ENCODE measurements at regions of chr11 and their contacts with region 1.

Region 1: GRCh38 chr11:67656278-67656922 is 5.9 kb upstream of the ACY3 start:
- DNase-seq: peak; percentile 49
- ATAC-seq: peak; percentile 36; the same call in 2 of the 3 replicates
- H3K4me3 ChIP-seq: peak overlapping the region; percentile 14; the same call in 1 of the 2 replicates
- H3K27ac ChIP-seq: peak overlapping the region; percentile 71
- H3K4me1 ChIP-seq: peaks cover 29% of the 10 kb centered on the region
- H3K27me3 ChIP-seq: no peaks in the 10 kb centered on the region
- CTCF ChIP-seq: no peak
- EP300 ChIP-seq: no peak
- POLR2A ChIP-seq: no peak
- RAD21 ChIP-seq: no peak

Region 2: DNA sequence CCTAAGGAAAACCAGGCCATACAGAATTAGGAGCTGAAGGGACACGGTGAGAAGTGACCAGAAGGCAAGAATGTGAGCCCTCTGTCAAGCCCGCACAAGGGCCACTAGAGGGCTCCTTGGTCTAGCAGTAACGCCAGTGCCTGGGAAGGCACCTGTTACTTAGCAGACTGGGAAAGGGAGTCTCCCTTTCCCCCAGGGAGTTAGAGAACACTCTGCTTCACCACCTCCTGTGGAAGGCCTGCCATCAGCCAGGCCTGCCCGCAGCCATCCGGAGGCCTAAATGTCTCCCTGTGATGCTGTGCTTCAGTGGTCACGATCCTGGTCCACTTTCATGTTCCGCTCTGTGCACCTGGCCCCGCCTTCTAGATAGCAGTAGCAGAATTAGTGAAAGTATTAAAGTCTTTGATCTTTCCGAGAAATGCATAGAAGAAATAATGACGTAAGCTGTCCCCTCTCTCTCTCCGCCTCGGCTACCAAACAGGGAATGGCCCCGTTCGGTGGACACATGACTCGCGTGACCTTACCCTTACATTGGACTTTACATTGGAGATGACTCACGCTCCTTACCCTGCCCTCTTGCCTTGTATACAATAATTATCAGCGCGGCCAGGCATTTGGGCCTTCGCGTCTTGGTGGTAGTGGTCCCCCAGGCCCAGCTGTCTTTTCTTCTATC is 83.5 kb before region 1 on chr11:
- CTCF ChIA-PET with region 1: interaction called, 21 read pairs
- POLR2A ChIA-PET with region 1: interaction called, 6 read pairs
- RAD21 ChIA-PET with region 1: interaction called, 10 read pairs
- SMC1A ChIA-PET with region 1: interaction called, 21 read pairs
- in situ Hi-C with region 1: no loop called
- intact Hi-C with region 1: loop called (anchors 2 kb)
- DNase-seq: no peak
- ATAC-seq: peak; percentile 77
- H3K4me3 ChIP-seq: no peak overlapping the region
- H3K27ac ChIP-seq: no peak overlapping the region
- H3K4me1 ChIP-seq: peaks cover 5% of the 10 kb centered on the region
- H3K27me3 ChIP-seq: no peaks in the 10 kb centered on the region; a peak in 1 of 4 replicates
- CTCF ChIP-seq: peak; percentile 56 to 85 (median 62)
- EP300 ChIP-seq: no peak
- POLR2A ChIP-seq: no peak
- RAD21 ChIP-seq: peak; percentile 73

Region 3: GRCh38 chr11:67640021-67640757 is 16.2 kb before region 1 on chr11:
- CTCF ChIA-PET with region 1: interaction called, 132 read pairs
- POLR2A ChIA-PET with region 1: interaction called, 6 read pairs
- RAD21 ChIA-PET with region 1: interaction called, 49 read pairs
- SMC1A ChIA-PET with region 1: interaction called, 69 read pairs
- in situ Hi-C with region 1: no loop called
- intact Hi-C with region 1: loop called (anchors 1 kb)
- DNase-seq: no peak
- ATAC-seq: peak; percentile 93
- H3K4me3 ChIP-seq: no peak overlapping the region
- H3K27ac ChIP-seq: no peak overlapping the region
- H3K4me1 ChIP-seq: peaks cover 13% of the 10 kb centered on the region
- H3K27me3 ChIP-seq: no peaks in the 10 kb centered on the region; a peak in 1 of 4 replicates
- CTCF ChIP-seq: peak; percentile 65 to 83 (median 75)
- EP300 ChIP-seq: no peak
- POLR2A ChIP-seq: no peak
- RAD21 ChIP-seq: peak; percentile 68

Region 4: DNA sequence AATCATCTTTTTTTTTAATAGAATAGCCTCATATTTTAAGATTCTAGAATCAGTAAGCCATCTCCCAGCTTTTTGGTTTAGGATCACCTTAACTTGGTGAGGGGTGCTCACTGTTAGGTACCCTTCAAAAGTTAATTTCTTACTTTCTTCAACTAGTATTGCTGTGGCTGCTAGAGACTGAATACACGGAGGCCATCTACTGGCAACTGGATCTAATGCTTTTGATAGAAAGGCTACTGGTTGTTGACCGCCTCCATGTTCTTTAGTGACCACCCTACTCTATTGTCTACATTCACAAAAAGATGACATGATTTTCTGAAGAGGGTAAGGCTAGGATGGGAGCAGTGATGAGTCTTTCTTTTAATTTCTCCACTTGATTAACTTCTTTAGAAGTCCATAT is 34.7 kb after region 1 on chr11:
- CTCF ChIA-PET with region 1: interaction called, 10 read pairs
- POLR2A ChIA-PET with region 1: no interaction called
- RAD21 ChIA-PET with region 1: no interaction called
- SMC1A ChIA-PET with region 1: no interaction called
- in situ Hi-C with region 1: no loop called
- intact Hi-C with region 1: no loop called
- DNase-seq: no peak
- ATAC-seq: 0 out of 3 replicates have a peak, but pooled peaks have one; percentile 36
- H3K4me3 ChIP-seq: no peak overlapping the region
- H3K27ac ChIP-seq: no peak overlapping the region
- H3K4me1 ChIP-seq: no peaks in the 10 kb centered on the region
- H3K27me3 ChIP-seq: peaks cover 1 to 3% of the 10 kb centered on the region in 2 experiments; a peak in 3 of 4 replicates
- CTCF ChIP-seq: peak; percentile 26 to 42 (median 39); a peak in 5 of 6 replicates
- EP300 ChIP-seq: no peak
- POLR2A ChIP-seq: no peak
- RAD21 ChIP-seq: peak; percentile 52